Common myeloid progenitor, CD34-positive (primary cell): ENCODE measurements at regions of chr2 and their contacts with region 1.

Region 1: DNA sequence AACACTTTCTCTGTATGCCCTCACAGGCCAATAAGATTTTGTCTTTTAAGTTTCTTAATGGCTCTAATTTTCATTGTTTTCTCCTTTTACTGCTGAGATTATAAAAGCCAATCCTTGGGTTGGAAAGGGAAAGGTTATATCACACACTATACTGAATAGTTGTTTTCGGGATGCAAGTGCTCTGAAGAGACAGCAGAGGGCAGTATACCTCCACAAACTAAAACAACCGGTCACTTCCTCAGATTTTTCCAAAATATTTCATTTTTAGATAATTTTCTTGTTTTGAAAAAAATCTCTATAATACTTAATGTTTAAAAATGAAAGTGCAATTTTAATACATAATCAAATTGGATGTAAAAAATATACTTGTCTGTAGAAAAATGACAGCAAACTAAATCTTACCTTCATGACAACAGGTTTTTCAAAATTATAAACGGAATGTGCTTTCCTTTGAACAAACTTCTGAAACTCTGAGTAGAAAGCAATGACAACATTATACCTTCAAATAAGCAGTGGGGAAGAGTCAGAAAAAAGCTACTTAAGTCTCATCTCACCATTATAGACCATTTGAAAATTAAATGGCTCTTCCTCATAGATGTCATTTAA is 82.7 kb downstream of the ORC4 start:
- DNase-seq: peak; percentile 25 to 51 (median 38)
- H3K4me3 ChIP-seq: no peak overlapping the region
- H3K27ac ChIP-seq: no peak overlapping the region
- H3K4me1 ChIP-seq: no peaks in the 10 kb centered on the region
- H3K27me3 ChIP-seq: no peaks in the 10 kb centered on the region

Region 2: DNA sequence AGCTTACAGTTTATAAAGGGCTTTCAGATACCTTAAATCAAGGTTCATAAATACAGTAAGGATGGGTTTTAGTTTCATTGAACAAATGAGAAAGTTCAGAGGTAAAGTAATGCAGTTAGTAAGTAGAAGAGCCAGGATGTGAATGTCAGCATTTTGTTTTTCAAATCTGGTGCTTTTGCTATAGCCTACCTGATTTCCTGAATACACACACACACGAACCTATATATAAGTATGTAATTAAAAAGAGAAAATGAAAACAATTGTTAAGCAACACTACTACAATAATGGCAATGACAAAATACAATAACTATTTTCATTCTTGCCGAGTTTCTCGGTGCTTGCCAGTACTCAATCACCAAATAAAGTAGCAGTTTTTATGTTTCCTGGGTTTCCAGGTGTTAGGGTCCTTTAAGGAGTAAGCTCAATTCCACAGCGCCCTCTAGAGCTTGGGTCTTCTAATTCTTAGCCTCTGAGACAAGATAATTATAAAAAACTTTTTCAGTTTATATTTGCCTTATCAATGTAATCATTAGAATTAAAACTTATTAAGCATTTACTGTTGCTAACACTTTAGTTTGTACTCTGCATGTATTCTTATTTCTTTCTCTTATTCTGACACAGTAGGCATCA is 605.9 kb before region 1 on chr2:
- CTCF ChIA-PET with region 1: no interaction called
- POLR2A ChIA-PET with region 1: no interaction called
- DNase-seq: peak; percentile 3 to 28 (median 14)
- H3K4me3 ChIP-seq: no peak overlapping the region
- H3K27ac ChIP-seq: no peak overlapping the region
- H3K4me1 ChIP-seq: peaks cover 0 to 4% (median 3%) of the 10 kb centered on the region in 4 experiments
- H3K27me3 ChIP-seq: no peaks in the 10 kb centered on the region

Region 3: DNA sequence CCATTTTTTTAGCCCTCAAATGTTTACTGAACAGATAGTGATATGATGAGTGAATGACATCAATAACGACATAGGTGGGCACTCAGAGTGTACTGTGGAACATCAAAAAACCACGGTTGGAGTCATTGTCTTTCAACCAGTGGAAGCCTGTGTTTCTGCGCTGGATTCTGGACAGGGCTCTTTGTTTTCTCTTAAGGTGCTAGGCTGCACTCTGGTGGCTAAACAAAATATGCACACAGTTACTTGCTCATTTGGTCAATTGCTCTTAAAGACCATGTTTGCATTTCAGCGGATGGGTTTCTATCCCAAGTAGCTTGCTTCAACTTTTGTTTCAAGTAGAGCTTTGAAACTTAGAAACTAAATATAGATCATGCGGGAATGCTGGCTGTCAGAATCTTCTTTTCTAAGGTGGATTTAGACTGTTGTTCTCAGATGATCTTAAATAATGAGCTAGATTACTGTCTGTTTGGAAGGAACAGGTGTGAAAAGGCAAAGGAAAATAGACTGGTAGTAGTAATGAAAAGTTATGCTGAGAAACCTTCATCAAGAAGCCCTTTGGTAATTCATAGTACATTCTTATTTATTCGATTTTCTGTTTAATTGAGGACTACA is 1052.1 kb after region 1 on chr2:
- CTCF ChIA-PET with region 1: interaction called, 14 read pairs
- POLR2A ChIA-PET with region 1: no interaction called
- DNase-seq: peak; percentile 88 to 94 (median 88)
- H3K4me3 ChIP-seq: no peak overlapping the region
- H3K27ac ChIP-seq: no peak overlapping the region
- H3K4me1 ChIP-seq: peaks cover 0 to 12% (median 0%) of the 10 kb centered on the region in 4 experiments
- H3K27me3 ChIP-seq: no peaks in the 10 kb centered on the region